ENCODE measurements at regions of chr7 and their contacts with region 1.

Region 1: GRCh38 chr7:104923010-104923421 is 91.0 kb upstream of the KMT2E start:
- DNase-seq: peak; percentile 80 to 94
- H3K4me3 ChIP-seq: no peak overlapping the region
- H3K27ac ChIP-seq: peak overlapping the region; percentile 65 to 81 (median 73)
- H3K4me1 ChIP-seq: peaks cover 12 to 46% (median 31%) of the 10 kb centered on the region in 4 donors
- H3K27me3 ChIP-seq: no peaks in the 10 kb centered on the region
- CTCF ChIP-seq: peak in 5 of 7 experiments; percentile 56 to 85 (median 78)
- EP300 ChIP-seq: no peak
- POLR2A ChIP-seq: no peak

Region 2: DNA sequence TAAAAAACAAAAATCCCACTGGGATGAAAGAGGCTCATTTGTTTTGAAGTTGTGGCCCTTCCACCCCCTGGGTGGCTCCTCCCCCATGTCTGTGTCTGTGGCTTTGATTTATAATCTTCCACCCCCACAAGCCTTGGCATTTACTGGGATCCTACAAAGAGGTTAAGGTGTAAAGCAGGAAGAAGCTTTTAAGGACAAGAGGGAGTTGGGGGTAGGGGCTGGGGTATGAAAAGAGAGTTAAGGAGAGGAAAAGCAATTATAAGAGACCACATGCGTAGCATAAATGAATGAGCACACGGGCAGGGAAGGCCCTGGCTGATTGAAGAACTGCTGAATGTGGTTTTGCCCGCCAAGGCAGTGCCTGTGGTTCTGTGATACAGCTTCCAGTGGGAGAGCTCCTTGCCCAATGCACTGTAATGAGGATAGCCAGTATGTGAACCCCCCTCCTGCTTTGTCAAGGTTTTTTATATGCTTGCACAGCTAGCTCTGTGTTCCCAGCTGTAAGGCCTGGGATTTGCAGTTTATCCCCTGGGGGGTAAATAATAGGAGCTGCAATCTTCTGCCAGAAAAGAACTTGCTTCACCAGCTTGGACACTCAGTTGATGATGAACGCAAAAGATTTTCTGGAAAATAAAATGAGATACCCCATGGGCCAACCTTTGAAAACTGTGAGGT is 56.3 kb after region 1 on chr7:
- intact Hi-C with region 1: loop called (anchors 10 kb)
- DNase-seq: no peak
- H3K4me3 ChIP-seq: no peak overlapping the region
- H3K27ac ChIP-seq: peak overlapping the region; percentile 48 to 99 (median 80)
- H3K4me1 ChIP-seq: peaks cover 57 to 84% (median 73%) of the 10 kb centered on the region in 4 donors
- H3K27me3 ChIP-seq: no peaks in the 10 kb centered on the region
- CTCF ChIP-seq: no peak
- EP300 ChIP-seq: no peak
- POLR2A ChIP-seq: no peak